Caco-2 (cell line): ENCODE measurements at regions of chr1 and their contacts with region 1.

Region 1: GRCh38 chr1:206801467-206801866 is 29.2 kb upstream of the IL10 start:
- DNase-seq: peak; percentile 46 to 50
- H3K4me3 ChIP-seq: no peak overlapping the region
- H3K4me3 Mint-ChIP-seq: no peak overlapping the region
- H3K27ac Mint-ChIP-seq: no peak overlapping the region
- H3K4me1 ChIP-seq: no peaks in the 10 kb centered on the region
- H3K4me1 Mint-ChIP-seq: peaks cover 6% of the 10 kb centered on the region
- H3K27me3 ChIP-seq: no peaks in the 10 kb centered on the region
- H3K27me3 Mint-ChIP-seq: no peaks in the 10 kb centered on the region
- CTCF ChIP-seq: peak; percentile 16 to 51

Region 2: DNA sequence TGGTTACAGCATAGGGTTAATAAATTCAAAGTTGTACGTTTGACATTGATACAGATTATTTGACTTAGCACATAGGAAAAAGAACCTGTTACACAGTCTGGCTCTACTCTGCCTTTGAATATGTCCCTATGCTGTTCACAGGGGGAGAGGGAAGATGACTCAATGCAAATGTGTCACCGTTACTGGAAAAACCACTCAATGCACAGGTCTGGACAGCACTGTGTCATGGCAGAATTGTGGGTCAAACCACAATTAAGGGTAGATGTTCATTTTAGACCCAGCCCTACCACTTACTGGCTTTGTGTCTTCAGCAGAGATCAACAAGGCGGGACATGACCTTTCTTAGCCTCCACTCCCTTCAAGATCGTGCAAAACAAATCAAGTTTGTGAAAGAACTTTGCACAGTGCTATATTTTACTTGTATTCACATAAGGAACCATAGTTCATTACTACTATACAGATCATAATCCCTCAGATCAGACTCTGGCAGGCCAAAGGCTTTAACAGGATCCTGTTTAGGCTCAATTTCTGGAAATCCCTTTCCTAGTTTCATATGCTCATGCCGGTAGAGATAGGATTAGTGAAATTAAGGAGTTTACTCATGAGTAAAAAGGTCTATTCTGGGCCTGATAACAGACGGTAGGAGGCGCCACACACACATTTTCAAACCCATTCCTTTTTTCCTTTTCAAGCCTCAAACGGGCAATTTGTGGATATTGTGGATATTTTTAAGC is 211.3 kb before region 1 on chr1:
- CTCF ChIA-PET with region 1: no interaction called
- POLR2A ChIA-PET with region 1: no interaction called
- intact Hi-C with region 1: no loop called
- DNase-seq: no peak
- H3K4me3 ChIP-seq: no peak overlapping the region
- H3K4me3 Mint-ChIP-seq: no peak overlapping the region
- H3K27ac Mint-ChIP-seq: no peak overlapping the region
- H3K4me1 ChIP-seq: no peaks in the 10 kb centered on the region
- H3K4me1 Mint-ChIP-seq: no peaks in the 10 kb centered on the region
- H3K27me3 ChIP-seq: no peaks in the 10 kb centered on the region
- H3K27me3 Mint-ChIP-seq: no peaks in the 10 kb centered on the region
- CTCF ChIP-seq: no peak

Region 3: DNA sequence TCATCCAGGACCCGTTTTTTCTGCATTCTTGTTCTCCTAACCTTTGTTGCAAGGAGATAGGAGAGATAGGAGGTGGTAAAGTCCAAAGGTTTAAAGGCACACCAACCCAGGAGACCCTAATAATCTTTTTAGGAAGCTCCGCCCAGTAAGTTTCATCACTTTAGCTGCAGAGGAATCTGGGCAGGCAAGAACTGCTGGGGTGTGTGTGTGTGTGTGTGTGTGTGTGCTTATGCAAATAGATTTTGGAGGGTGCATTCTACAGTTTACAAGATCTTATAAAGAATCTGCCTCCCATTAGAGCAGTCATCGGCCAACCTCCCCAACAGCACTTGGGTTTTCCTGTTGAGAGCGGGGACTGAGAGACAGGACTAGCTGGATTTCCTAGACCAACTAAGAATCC is 25.2 kb before region 1 on chr1:
- CTCF ChIA-PET with region 1: interaction called, 3 read pairs
- POLR2A ChIA-PET with region 1: no interaction called
- intact Hi-C with region 1: loop called (anchors 1 kb)
- DNase-seq: peak; percentile 92 to 95
- H3K4me3 ChIP-seq: no peak overlapping the region
- H3K4me3 Mint-ChIP-seq: peak overlapping the region; percentile 58
- H3K27ac Mint-ChIP-seq: peak overlapping the region; percentile 90
- H3K4me1 ChIP-seq: peaks cover 57% of the 10 kb centered on the region
- H3K4me1 Mint-ChIP-seq: peaks cover 13% of the 10 kb centered on the region
- H3K27me3 ChIP-seq: no peaks in the 10 kb centered on the region
- H3K27me3 Mint-ChIP-seq: no peaks in the 10 kb centered on the region
- CTCF ChIP-seq: no peak

Region 4: DNA sequence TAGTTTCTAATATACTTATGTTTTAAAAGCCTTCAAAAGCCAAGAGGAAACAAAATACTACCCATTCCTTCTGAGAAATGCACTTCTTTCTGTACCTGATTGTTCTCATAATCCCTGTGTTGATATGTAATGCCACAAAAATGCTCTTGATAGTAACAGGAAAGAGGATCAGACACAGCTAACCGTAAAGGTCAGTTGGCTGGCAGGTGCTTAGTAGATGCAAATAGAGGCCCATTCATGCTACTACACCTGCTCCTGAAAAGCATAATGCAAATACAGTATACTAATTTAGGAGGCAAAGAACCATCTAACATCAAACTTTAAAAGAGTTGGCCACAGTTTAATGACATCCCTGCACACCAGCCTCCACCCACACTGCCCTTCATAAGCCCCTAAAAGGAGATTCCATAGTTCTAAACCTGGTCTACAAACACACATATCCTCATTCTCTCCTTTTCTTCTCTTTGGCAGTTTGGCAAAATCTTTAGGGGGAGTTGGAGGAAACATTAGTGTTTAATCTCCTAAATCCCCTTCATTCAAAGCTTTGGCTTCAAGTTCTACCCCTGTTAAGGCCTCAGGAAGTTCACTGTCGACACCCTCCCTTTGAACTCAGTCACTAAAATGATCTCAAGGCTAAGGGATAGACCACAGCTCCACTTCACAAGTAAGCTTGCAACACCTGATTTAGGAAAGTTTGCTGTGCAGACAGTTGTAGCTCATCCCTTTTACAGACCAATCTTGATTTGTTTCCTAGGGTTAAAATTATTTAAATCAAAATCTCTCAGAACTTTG is 947.5 kb after region 1 on chr1:
- CTCF ChIA-PET with region 1: no interaction called
- POLR2A ChIA-PET with region 1: no interaction called
- intact Hi-C with region 1: no loop called
- DNase-seq: peak in 1 of 2 experiments; percentile 31
- H3K4me3 ChIP-seq: no peak overlapping the region
- H3K4me3 Mint-ChIP-seq: no peak overlapping the region
- H3K27ac Mint-ChIP-seq: no peak overlapping the region
- H3K4me1 ChIP-seq: peaks cover 64% of the 10 kb centered on the region
- H3K4me1 Mint-ChIP-seq: peaks cover 22% of the 10 kb centered on the region
- H3K27me3 ChIP-seq: no peaks in the 10 kb centered on the region
- H3K27me3 Mint-ChIP-seq: no peaks in the 10 kb centered on the region
- CTCF ChIP-seq: no peak